ENCODE measurements at regions of chr12 and their contacts with region 1.

Region 1: DNA sequence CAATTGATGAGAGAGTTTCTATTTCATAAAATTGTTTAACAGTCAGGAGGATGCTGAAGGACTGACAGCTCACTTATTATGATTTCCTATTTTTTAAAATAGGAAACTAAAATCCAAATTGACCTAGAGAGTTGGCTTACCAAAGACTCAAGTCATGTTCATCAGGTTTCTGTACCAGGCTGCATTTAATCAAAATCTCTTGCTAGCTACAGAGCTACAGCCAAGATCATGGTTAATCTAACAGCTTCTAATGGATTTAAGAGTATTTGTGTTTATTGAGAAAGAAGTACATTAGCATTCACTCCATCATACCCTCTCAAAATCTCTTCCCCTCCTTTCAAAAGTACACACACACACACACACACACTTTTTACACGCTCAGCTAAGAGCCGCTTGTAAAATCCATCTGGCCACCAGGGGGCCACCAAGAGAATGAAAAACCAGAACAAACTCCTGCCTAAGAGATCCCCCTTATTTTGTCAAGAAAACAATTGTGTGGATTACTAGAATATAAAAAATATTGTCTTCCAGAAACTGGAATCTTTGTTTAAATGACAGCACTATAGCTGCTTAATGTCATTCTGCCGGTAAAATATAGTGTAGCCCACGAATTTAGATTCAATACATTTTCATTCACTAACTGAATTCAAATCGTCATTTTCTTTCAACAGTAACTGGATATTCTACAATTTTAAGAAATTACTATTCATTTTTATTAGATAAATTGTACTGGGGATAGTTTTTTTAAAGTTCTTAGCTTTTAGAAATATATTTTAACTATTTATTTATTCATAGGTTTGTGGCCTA is 334.0 kb downstream of the BTG1 start:
- DNase-seq: peak; percentile 72
- ATAC-seq: peak; percentile 44
- H3K4me3 Mint-ChIP-seq: no peak overlapping the region
- H3K27ac Mint-ChIP-seq: no peak overlapping the region
- H3K4me1 Mint-ChIP-seq: peaks cover 11% of the 10 kb centered on the region
- H3K27me3 Mint-ChIP-seq: no peaks in the 10 kb centered on the region

Region 2: GRCh38 chr12:91763654-91764370 is 47.9 kb before region 1 on chr12:
- CTCF ChIA-PET with region 1: no interaction called
- POLR2A ChIA-PET with region 1: no interaction called
- DNase-seq: no peak
- ATAC-seq: no peak
- H3K4me3 Mint-ChIP-seq: no peak overlapping the region
- H3K27ac Mint-ChIP-seq: no peak overlapping the region
- H3K4me1 Mint-ChIP-seq: no peaks in the 10 kb centered on the region
- H3K27me3 Mint-ChIP-seq: no peaks in the 10 kb centered on the region

Region 3: GRCh38 chr12:91778938-91779400 is 32.7 kb before region 1 on chr12:
- CTCF ChIA-PET with region 1: interaction called, 10 read pairs
- POLR2A ChIA-PET with region 1: no interaction called
- DNase-seq: peak; percentile 49
- ATAC-seq: peak; percentile 85
- H3K4me3 Mint-ChIP-seq: peak overlapping the region; percentile 53
- H3K27ac Mint-ChIP-seq: peak overlapping the region; percentile 81
- H3K4me1 Mint-ChIP-seq: peaks cover 17% of the 10 kb centered on the region
- H3K27me3 Mint-ChIP-seq: no peaks in the 10 kb centered on the region

Region 4: DNA sequence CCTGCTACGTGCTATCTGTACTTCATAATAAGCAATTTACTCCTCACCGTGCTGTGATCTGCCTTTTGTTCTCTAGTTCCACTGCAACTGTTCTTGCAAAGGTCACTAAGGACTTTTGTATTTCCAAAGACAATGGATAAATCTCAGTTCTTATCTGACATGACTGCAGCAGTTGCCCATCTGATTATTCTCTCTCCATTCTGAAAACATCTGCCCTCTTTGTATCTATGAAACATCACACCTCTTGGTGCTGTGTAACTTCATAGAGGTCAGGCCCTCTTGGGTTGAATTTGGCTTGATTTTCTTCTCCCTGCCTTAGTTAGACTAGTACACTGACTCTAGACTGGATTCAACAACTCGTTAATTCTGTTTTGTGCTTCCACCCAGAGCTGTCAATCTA is 14.3 kb after region 1 on chr12:
- CTCF ChIA-PET with region 1: interaction called, 25 read pairs
- POLR2A ChIA-PET with region 1: no interaction called
- DNase-seq: no peak
- ATAC-seq: no peak
- H3K4me3 Mint-ChIP-seq: no peak overlapping the region
- H3K27ac Mint-ChIP-seq: no peak overlapping the region
- H3K4me1 Mint-ChIP-seq: no peaks in the 10 kb centered on the region
- H3K27me3 Mint-ChIP-seq: no peaks in the 10 kb centered on the region

Region 5: GRCh38 chr12:91877022-91877421 is 65.3 kb after region 1 on chr12:
- CTCF ChIA-PET with region 1: interaction called, 14 read pairs
- POLR2A ChIA-PET with region 1: no interaction called
- DNase-seq: peak; percentile 91
- ATAC-seq: peak; percentile 98
- H3K4me3 Mint-ChIP-seq: peak overlapping the region; percentile 64
- H3K27ac Mint-ChIP-seq: peak overlapping the region; percentile 93
- H3K4me1 Mint-ChIP-seq: peaks cover 50% of the 10 kb centered on the region
- H3K27me3 Mint-ChIP-seq: no peaks in the 10 kb centered on the region

Region 6: DNA sequence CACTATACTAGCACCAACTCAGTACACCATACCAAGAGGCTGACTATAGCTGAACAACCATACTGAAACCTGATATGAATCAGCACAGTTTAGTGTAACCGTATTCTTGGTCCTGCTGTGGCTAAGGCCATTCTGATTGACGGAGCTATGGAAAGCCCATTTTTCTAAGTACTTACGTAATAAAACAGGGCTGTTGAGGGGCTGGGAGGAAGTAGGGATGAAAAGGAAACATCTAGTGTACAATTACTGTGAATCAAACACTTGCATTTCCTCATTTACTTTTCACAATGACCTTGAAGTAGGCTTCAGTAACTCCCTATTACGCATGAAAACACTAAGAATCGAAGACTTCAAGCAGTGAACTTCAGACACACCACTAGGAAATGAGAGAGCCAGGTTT is 135.8 kb after region 1 on chr12:
- CTCF ChIA-PET with region 1: no interaction called
- POLR2A ChIA-PET with region 1: no interaction called
- DNase-seq: no peak
- ATAC-seq: no peak
- H3K4me3 Mint-ChIP-seq: no peak overlapping the region
- H3K27ac Mint-ChIP-seq: no peak overlapping the region
- H3K4me1 Mint-ChIP-seq: peaks cover 8% of the 10 kb centered on the region
- H3K27me3 Mint-ChIP-seq: no peaks in the 10 kb centered on the region

Region 7: DNA sequence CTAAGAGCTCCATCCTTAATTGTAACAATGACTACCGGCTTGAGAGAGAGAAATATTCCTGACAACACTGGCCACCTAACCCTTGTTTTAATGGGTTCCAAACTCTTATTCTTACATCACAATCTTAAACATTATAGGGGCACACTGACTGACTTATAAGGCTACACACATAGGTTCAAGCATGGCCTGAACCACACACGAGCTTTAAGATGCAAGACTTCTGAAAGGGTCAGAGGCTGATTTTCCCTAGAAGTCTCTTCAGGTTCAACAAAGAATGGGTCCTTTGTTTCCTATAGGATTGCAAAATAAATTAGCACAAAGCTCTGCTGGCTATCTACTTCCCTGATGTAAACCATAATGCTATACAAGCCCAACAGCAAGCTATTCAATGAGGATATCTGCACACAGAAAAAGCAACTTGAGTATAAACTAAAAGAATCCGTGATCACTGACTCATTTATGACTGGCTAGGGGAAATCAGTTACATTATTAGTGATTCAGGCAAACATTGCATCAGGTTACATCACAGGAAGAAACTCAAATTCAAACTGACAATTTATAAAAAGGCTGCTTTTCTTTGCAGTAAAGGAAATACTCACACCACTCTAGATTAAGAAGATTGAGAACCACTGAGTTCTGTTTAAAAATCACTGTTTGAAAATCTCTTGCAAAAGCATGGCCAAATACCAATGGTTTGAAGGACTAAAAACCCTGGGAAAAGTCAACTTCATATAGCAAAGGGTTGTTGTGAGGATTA is 325.5 kb after region 1 on chr12:
- CTCF ChIA-PET with region 1: interaction called, 28 read pairs
- POLR2A ChIA-PET with region 1: no interaction called
- DNase-seq: no peak
- ATAC-seq: no peak
- H3K4me3 Mint-ChIP-seq: peak overlapping the region; percentile 100
- H3K27ac Mint-ChIP-seq: peak overlapping the region; percentile 86
- H3K4me1 Mint-ChIP-seq: peaks cover 71% of the 10 kb centered on the region
- H3K27me3 Mint-ChIP-seq: no peaks in the 10 kb centered on the region

Measured in activated CD8-positive, alpha-beta T cell treated with anti-CD3 and anti-CD28 coated beads, Interleukin-2, amount 10 ng/mL, durations not matched to agents 7 days and 5 days (primary cell).